ENCODE measurements at regions of chr16 and their contacts with region 1.

Region 1: DNA sequence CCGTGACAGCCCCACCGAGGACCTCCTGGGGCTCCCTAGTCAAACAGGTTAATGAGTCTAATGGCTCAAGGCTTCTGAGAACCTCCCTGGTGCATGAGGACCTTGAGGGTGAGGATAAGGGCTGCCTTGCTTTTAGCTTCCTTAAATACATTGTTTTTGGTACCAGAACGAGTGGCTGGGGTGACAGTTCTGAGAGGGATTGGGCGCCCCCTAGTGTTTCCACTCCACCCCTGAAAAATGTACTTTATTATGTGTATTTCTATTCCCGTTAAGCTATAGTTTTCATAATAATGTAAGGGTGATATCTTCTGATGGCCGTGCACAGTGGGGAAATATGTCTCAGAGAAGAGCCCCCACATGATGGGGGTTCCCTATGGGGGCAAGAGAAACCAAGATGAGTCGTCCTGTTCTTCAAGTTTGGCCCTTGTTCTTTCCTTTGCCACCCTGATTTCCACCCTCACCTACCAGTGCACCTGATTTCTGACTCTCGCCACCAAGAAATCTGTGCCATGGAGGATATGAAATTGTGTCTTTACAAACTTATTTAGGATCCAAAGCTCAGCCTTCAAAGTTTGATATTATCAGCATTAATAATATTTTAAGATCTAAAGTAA is 14.5 kb upstream of the VWA3A start:
- DNase-seq: no peak
- H3K4me3 ChIP-seq: no peak overlapping the region
- H3K27me3 ChIP-seq: no peaks in the 10 kb centered on the region
- CTCF ChIP-seq: peak; percentile 85

Region 2: GRCh38 chr16:21611546-21612384 is 466.0 kb before region 1 on chr16:
- CTCF ChIA-PET with region 1: no interaction called
- POLR2A ChIA-PET with region 1: no interaction called
- DNase-seq: no peak
- H3K4me3 ChIP-seq: no peak overlapping the region
- H3K27me3 ChIP-seq: no peaks in the 10 kb centered on the region
- CTCF ChIP-seq: no peak

Region 3: DNA sequence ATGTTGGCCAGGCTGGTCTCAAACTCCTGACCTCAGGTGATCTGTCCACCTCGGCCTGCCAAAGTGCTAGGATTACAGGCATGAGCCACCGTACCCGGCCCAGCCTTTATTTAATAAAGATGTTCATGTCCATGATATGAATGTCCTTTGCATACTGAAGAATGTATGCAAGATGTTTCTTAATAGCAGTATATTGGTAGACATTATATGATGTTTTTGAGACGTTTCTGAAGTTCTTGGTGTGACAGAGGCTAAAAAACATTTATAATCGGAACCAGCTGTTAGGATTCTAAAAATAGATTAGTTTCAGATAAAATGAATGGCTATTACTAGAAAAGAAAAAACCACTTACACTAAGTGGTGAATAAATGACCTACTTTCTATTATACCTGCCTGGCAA is 88.7 kb before region 1 on chr16:
- CTCF ChIA-PET with region 1: interaction called, 32 read pairs
- POLR2A ChIA-PET with region 1: no interaction called
- DNase-seq: peak; percentile 19
- H3K4me3 ChIP-seq: no peak overlapping the region
- H3K27me3 ChIP-seq: no peaks in the 10 kb centered on the region
- CTCF ChIP-seq: no peak

Region 4: DNA sequence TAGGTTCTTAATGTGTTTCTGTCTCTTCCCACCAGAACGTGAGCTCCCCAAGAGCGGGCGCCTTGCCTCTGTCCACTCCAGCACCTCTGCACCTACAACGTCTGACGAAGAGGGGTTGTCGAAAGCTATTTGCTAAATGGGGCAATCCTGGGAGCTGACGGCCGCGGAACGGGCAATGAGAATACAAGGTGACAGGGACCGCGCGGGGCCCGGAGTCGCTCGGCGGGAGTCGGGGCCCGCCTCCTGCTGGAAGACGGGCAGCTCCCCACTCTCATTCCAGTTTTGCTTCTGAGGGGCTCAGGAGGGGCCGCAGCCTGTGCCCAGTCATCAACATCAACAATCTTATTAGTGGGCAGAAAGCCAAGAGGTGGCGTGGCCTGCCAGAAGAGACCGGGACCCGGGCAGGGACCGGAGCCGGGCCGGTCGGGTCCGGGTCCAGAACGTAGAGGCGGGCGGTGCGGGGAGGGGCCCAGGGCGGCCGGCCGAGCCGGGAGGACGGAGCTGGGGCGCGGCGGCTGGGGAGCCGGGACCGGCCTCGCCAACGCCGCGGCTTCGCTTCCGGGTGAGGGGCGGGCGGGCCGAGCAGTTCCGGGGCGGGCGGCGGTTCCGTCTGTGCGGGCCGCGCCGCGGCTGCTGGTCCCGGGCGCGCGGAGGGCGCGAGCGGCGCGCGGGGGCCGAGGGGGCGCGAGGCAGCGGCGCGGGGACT is 70.1 kb before region 1 on chr16 and contains the start of gene MOSMO:
- CTCF ChIA-PET with region 1: interaction called, 86 read pairs
- POLR2A ChIA-PET with region 1: no interaction called
- DNase-seq: no peak
- H3K4me3 ChIP-seq: peak within 1 kb of the TSS; percentile 94
- H3K27me3 ChIP-seq: no peaks in the 10 kb centered on the region
- CTCF ChIP-seq: no peak
- polyA plus RNA-seq, gene MOSMO: 7.3 and 11.6 TPM in 2 replicates

Region 5: DNA sequence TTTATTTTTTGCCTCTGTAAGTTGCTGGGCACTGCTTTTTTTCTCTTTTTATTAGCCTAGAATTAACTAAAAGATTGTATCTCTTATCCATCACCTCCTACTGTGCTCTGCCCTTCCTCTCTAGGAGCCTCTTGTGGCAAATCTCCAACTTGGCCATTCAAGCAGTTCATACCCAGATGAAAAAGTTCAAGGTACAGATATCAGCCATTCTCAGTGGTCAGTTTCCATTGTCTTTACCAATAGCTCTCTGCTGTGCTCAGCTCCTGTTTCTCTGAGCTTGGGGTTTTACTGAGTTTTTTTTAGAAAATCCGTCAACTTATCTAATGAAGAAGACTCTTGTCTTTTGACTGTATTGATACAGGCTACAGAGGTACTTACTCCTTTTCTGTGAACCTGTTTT is 54.3 kb before region 1 on chr16:
- CTCF ChIA-PET with region 1: interaction called, 21 read pairs
- POLR2A ChIA-PET with region 1: no interaction called
- DNase-seq: no peak
- H3K4me3 ChIP-seq: no peak overlapping the region
- H3K27me3 ChIP-seq: no peaks in the 10 kb centered on the region
- CTCF ChIP-seq: no peak

Region 6: DNA sequence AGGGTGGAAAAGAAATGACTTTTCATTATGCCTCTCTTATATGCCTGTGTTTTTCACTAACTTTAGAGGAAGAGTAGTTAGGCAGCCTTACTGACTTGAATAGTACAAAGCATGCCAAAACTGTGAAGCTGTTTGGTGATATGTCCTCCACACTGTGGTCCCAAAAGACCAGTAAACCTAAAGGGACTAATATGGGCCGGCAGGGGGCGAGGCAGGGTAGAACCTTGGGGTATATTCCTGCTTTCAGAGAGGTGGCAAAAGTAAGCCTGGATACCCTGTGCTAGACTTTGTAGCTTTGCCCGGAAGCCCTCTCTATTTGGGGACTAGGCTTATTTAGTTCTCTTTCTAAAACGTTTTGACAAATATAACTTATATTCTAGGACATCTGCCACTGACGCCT is 21.9 kb before region 1 on chr16:
- CTCF ChIA-PET with region 1: interaction called, 11 read pairs
- POLR2A ChIA-PET with region 1: no interaction called
- DNase-seq: no peak
- H3K4me3 ChIP-seq: no peak overlapping the region
- H3K27me3 ChIP-seq: no peaks in the 10 kb centered on the region
- CTCF ChIP-seq: no peak

Region 7: DNA sequence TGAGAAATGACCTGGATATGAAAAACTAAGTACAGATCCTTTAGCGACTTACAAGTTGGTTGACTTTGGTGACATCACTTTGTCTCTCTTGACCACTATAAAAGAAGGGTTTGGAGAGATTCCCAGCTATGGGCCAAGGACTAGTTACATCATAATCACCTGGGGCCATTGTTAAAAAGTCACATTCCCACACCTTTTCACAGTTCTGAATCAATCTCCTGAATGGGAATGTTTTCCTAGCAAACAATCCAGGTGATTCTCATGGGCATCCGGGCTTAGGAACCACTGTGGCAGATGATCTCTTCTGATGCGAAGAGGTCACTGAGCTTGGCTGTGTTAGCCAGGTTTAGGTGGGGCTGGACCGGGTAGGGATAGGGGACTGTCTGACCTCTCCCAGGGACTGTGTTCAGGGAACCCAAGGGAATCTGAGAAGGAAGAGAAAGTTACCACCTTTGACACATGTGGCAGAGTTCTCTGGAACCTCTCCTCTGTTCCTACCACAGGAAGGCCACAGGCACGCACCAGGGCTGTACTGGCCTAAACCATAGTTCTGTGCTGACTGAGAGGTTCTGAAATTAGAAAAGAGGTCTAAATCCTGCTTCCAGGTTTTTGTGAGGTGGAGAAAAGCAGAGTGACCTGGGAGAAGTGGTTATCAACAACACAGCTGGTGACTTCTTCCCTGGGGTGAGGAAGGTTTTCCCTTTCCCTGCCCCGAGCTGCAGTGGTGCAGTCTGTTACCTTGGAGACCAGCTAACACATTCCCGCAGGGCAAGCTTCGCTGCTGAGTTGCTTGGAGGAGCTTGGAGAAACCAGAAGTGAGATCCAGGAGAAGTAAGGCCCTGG is 14.2 kb after region 1 on chr16 and contains the start of gene VWA3A:
- CTCF ChIA-PET with region 1: interaction called, 40 read pairs
- POLR2A ChIA-PET with region 1: no interaction called
- DNase-seq: peak; percentile 31
- H3K4me3 ChIP-seq: no peak within 1 kb of the TSS
- H3K27me3 ChIP-seq: no peaks in the 10 kb centered on the region
- CTCF ChIP-seq: no peak
- polyA plus RNA-seq, gene VWA3A: 0.02 and 0.15 TPM in 2 replicates

Region 8: GRCh38 chr16:22190776-22191531 is 113.1 kb after region 1 on chr16:
- CTCF ChIA-PET with region 1: interaction called, 20 read pairs
- POLR2A ChIA-PET with region 1: no interaction called
- DNase-seq: peak; percentile 98
- H3K4me3 ChIP-seq: peak overlapping the region; percentile 47
- H3K27me3 ChIP-seq: no peaks in the 10 kb centered on the region
- CTCF ChIP-seq: no peak

Region 9: DNA sequence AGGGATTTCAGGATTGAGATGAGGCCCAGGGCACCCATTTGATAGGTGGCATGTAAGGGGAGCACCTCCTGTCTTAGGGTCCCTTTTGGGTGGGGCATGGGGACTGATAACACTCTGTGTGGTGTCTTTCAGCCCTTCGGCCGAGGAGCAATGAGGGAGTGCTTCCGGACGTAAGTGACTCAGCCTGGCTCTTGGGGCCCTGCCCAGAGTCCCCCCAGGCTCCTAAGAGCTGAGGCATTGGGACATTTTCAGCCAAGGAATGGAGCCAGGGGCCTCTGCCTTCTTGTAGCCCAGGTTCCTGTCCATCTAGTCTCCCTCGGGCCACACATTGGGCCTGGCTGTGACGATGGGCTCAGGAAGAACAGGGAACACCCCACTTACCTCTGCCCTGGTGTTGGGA is 172.7 kb after region 1 on chr16:
- CTCF ChIA-PET with region 1: no interaction called
- POLR2A ChIA-PET with region 1: no interaction called
- DNase-seq: no peak
- H3K4me3 ChIP-seq: no peak overlapping the region
- H3K27me3 ChIP-seq: no peaks in the 10 kb centered on the region
- CTCF ChIP-seq: no peak